ENCODE measurements at regions of chr12 and their contacts with region 1.

Region 1: DNA sequence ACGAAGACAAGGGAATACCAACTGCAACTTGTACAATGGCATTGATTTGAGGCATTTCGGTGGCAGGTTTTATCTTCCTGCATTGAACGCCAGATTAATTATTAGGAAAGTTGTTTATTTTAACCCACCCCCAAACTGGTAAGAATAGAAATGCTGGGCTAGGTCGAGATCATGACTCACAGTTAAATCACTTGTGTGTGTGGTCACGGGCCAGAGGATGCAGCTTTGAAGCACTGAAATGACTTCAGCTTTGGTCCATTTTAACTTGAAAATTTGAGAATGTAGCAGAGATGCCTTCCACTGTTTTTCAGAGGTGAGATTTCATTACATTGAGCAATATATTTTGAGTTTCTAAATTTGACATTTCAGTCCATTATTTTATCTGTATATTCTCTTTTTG is 23.6 kb upstream of the KCNH3 start:
- DNase-seq: no peak
- ATAC-seq: no peak

Region 2: DNA sequence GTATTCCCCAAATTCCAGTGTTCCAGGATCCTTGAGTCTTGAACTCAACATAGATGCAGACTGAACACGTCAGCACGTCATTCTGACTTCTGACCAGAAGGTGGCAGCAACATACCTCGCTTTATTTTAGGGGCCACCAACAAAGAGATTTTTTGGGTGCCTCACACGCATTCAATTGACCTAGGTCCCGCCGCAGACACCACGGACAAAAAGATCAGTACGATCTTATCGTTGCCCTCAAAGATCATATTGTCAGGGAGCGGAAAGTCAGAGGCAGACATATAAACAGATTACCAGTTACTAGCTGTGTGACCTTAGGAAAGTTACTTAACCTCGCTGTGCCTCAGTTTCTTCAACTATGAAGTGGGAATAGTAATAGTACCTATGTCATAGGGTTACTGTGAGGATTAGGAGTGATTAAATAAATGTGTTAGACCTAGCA is 226.8 kb before region 1 on chr12:
- intact Hi-C with region 1: loop called (anchors 5 kb)
- DNase-seq: no peak
- ATAC-seq: no peak

Region 3: DNA sequence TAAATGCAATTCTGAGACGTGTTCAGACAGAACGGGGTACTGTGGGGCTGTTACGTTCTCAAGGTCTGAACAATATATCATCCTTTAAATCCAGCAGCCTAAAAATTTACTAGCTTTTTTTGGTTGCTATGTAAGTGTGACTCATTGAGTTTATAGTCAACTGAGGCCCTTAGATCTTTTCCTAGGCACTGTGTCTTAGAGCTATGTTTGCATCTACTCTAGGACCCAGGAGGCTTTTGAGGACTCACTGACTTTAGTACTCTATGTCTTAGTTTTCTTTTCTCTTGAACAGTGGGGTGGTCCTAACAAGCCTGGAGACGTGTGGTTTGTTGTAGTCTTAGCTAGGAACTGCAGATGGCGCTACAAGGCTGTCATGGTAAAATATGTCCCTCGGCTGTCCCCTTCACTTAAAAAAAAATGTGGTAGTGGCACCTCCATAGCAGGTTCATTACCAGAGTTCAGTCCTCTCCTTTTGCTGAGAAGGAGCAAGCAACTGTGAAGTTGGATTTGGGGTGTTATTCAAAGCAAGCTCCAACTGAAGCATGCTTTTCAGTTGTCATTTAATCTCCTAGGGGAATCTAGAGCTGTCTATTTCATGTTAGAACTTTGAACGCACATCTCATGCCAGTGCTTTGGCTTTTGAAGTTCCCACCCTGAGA is 156.7 kb before region 1 on chr12:
- intact Hi-C with region 1: loop called (anchors 1 kb)
- DNase-seq: no peak
- ATAC-seq: peak; percentile 67

Region 4: GRCh38 chr12:49580572-49581535 is 65.6 kb after region 1 on chr12:
- intact Hi-C with region 1: loop called (anchors 5 kb)
- DNase-seq: no peak
- ATAC-seq: peak; percentile 74

Measured in Right ventricle myocardium inferior (tissue), 1 donor.